Right lobe of liver (tissue), 6 donors: ENCODE measurements at regions of chr3 and their contacts with region 1.

Region 1: DNA sequence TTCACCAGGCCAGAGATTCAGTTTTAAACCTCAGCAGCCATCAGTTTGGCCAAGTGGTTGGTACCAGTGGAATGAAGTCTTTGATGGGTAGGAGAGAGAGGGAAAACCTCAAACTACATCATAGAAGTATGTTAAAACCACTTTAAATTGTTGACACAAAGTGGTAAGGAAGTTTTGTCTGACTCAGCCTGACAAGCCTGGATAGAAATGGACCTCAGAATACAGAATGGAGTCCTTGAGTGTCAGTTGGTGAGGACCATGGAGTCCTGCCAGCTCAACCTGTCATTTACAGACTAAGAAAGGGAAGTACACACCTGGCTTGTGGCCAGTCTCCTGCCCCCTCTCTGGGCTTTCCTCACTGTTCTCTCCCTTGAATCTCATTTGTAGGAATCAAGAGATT is 12.1 kb downstream of the EAF1 start:
- DNase-seq: no peak
- ATAC-seq: no peak
- H3K4me3 ChIP-seq: no peak overlapping the region
- H3K27ac ChIP-seq: no peak overlapping the region
- H3K4me1 ChIP-seq: peaks cover 0 to 11% (median 0%) of the 10 kb centered on the region in 4 donors
- H3K27me3 ChIP-seq: no peaks in the 10 kb centered on the region
- CTCF ChIP-seq: no peak
- POLR2A ChIP-seq: no peak

Region 2: DNA sequence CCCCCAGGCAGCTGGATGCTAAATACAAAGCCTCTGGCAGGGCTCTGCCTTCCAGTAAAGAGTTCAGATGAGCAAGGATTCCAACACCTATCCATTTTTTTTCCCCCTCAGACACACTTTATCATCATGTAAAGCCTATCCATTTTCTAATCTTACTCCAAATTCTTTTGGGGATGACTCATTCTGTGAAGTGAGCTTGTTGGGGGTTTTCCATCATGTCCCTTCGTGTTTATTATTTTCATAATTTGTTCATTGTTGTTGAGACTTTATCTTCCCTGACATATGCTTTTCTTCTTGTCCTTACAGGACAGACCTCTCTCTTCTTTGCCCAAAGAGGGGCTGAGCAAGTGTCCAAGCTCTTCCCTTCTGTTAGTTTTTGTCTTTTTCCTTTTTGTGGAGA is 72.4 kb before region 1 on chr3:
- intact Hi-C with region 1: no loop called
- DNase-seq: no peak
- ATAC-seq: no peak
- H3K4me3 ChIP-seq: no peak overlapping the region
- H3K27ac ChIP-seq: no peak overlapping the region
- H3K4me1 ChIP-seq: peaks cover 0 to 10% (median 0%) of the 10 kb centered on the region in 4 donors
- H3K27me3 ChIP-seq: no peaks in the 10 kb centered on the region
- CTCF ChIP-seq: no peak
- POLR2A ChIP-seq: no peak

Region 3: DNA sequence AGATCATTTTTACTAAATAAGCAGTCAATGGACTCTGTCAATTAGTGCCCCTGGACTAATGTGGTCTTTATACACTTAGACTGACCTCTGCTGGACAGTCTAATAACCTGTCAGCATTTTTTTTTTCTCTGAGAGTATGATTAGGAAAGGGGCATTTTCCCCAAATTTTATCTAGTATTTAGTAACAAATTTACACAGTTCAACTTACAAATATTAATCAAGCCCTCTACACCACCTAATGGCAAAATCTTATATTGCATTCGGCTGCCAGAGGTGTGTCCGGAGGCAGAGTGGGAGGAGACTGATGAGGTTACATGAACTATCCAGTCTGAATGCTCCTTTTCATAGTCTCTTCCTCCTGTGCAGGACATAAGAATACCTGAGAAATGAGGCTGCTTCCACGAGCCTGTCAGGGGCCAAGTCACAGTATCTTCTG is 118.1 kb after region 1 on chr3:
- intact Hi-C with region 1: loop called in 1 of 2 experiments (anchors 10 kb)
- DNase-seq: peak in 2 of 3 donors; percentile 27 to 70
- ATAC-seq: peak; percentile 84 to 92 (median 88)
- H3K4me3 ChIP-seq: no peak overlapping the region
- H3K27ac ChIP-seq: peak overlapping the region in 1 of 3 donors; percentile 26
- H3K4me1 ChIP-seq: peaks cover 0 to 32% (median 6%) of the 10 kb centered on the region in 4 donors
- H3K27me3 ChIP-seq: no peaks in the 10 kb centered on the region
- CTCF ChIP-seq: peak; percentile 70 to 75 (median 72)
- POLR2A ChIP-seq: no peak